GM23248 (cell line): ENCODE measurements at regions of chr15 and their contacts with region 1.

Region 1: GRCh38 chr15:84955089-84955848 is 26.4 kb upstream of the PDE8A start:
- DNase-seq: peak; percentile 86
- H3K4me3 ChIP-seq: peak overlapping the region; percentile 57
- H3K27ac ChIP-seq: no peak overlapping the region
- H3K4me1 ChIP-seq: peaks cover 6% of the 10 kb centered on the region
- H3K27me3 ChIP-seq: no peaks in the 10 kb centered on the region

Region 2: DNA sequence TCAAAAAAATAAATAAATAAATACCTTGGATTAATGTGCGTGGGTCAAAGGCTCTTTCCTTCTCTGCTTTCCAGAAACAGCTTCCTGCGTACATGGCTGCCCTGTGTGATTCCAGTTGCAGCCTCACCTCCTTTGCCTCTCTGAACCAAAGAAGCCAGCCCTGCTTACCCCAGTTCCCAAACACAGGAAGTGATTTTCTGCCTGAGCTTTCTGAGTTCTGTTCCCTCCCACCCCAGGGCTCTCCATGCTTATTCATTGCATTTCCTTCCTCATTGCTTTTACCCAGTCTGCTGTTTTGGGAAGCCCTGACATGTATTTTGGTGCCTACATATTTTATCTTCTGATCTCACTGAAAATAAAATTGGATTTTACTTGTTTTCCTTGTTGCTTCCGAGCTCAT is 339.0 kb before region 1 on chr15:
- in situ Hi-C with region 1: no loop called
- DNase-seq: no peak
- H3K4me3 ChIP-seq: no peak overlapping the region
- H3K27ac ChIP-seq: no peak overlapping the region
- H3K4me1 ChIP-seq: peaks cover 7% of the 10 kb centered on the region; the same call in 1 of the 2 replicates
- H3K27me3 ChIP-seq: no peaks in the 10 kb centered on the region

Region 3: GRCh38 chr15:85044251-85044853 is 89.1 kb after region 1 on chr15:
- in situ Hi-C with region 1: loop called (anchors 5 kb)
- DNase-seq: peak; percentile 83
- H3K4me3 ChIP-seq: no peak overlapping the region
- H3K27ac ChIP-seq: no peak overlapping the region
- H3K4me1 ChIP-seq: peaks cover 27% of the 10 kb centered on the region
- H3K27me3 ChIP-seq: no peaks in the 10 kb centered on the region

Region 4: GRCh38 chr15:85296615-85297402 is 341.5 kb after region 1 on chr15:
- in situ Hi-C with region 1: loop called (anchors 25 kb)
- DNase-seq: peak; percentile 81
- H3K4me3 ChIP-seq: peak overlapping the region; percentile 68
- H3K27ac ChIP-seq: no peak overlapping the region
- H3K4me1 ChIP-seq: no peaks in the 10 kb centered on the region
- H3K27me3 ChIP-seq: no peaks in the 10 kb centered on the region

Region 5: GRCh38 chr15:86311568-86312280 is 1356.5 kb after region 1 on chr15:
- in situ Hi-C with region 1: no loop called
- DNase-seq: no peak
- H3K4me3 ChIP-seq: no peak overlapping the region
- H3K27ac ChIP-seq: no peak overlapping the region
- H3K4me1 ChIP-seq: no peaks in the 10 kb centered on the region
- H3K27me3 ChIP-seq: no peaks in the 10 kb centered on the region